Keratinocyte (primary cell): ENCODE measurements at regions of chr19 and their contacts with region 1.

Region 1: DNA sequence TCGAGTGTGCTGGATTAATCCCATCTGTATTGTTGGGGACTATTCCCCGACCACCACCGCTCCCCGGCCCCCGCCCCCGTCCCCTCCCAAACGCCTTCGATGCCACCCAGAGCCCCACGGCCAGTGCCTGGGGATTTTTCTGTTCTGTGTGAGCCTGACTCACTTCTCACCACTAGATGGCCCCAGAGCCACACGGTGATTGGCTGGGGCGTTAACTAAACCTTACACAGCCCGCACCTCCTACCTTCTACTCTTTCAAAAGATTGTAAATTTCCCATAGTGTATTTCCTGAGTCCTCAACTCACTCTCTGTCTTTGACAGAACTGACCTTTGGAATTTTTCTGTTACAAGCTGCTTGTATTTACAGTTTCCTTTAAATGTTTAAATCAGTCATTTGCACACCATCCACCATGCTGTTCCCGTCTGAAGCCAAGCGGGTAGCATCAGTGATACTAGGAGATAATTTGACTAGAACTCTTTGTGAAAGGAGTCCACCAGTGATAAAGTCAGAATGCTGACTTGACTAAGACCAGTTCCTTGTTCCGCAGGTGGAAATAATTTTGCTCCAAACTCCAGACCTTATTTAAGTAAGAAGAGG is 61.4 kb downstream of the RFX2 start:
- DNase-seq: no peak
- H3K4me3 ChIP-seq: no peak overlapping the region
- H3K27ac ChIP-seq: peak overlapping the region; percentile 28
- H3K4me1 ChIP-seq: peaks cover 4% of the 10 kb centered on the region
- H3K27me3 ChIP-seq: no peaks in the 10 kb centered on the region
- CTCF ChIP-seq: peak; percentile 68 to 93 (median 90)

Region 2: DNA sequence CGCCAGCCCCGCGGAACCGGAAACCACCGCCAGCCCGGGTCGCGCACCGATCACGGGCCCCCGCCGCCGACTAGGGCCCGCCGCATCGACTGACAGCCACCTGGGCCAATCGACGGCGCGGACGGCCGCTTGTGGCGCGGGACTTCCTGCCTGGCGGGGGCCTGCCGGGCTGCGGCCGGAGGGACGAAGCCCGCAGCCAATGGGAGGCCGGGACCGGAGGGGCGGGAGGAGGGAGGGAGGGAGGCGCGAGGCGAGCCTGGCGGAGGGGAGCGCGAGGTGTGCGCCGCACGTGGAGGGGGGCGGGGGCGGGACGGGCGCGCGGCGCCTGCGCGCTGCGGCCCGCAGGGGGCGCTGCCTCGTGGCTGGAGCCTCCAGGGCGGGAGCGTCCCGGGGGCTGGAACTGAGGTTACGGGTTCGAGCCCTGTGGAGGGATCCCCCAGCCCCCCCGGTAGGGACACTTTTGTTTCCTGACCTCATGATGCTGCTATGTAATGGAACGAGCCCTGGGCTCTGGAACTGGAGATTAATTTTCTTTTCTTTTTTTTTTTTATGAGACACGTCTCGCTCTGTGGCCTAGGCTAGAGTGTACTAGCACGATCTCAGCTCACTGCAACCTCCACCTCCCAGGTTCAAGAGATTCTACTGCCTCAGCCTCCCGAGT is 231.2 kb after region 1 on chr19 and contains the start of gene MLLT1:
- dilution Hi-C with region 1: loop called (anchors 25 kb)
- DNase-seq: peak; percentile 67
- H3K4me3 ChIP-seq: peak within 1 kb of the TSS; percentile 87 to 89 (median 87)
- H3K27ac ChIP-seq: peak within 1 kb of the TSS; percentile 61
- H3K4me1 ChIP-seq: peaks cover 5% of the 10 kb centered on the region
- H3K27me3 ChIP-seq: no peaks in the 10 kb centered on the region
- CTCF ChIP-seq: peak in 2 of 3 experiments; percentile 62 to 77
- polyA plus RNA-seq, gene MLLT1: 8.2 to 13.8 TPM (median 8.3 TPM) in 3 replicates